T-cell (primary cell): ENCODE measurements at regions of chr12 and their contacts with region 1.

Region 1: DNA sequence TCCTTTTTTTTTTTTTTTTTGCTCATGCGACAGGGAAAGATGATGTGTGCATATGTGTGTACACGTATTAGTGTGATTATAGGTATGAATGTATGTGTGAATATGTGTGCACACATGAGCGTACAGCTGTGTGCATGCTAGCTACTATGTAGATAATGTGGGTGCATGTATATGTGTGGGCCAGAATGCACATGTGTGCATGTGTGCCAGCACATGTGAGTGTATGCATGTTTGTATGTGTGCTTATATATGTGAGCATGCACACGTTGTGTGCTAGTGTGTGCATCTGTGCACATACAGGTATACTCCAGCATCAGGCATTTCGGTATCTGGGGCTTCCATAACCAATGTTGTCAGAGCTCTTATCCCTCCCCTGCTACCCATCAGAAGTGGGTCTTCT is 541.1 kb downstream of the AACS start:
- DNase-seq: no peak
- ATAC-seq: no peak
- H3K4me3 ChIP-seq: no peak overlapping the region
- H3K4me3 Mint-ChIP-seq: no peak overlapping the region
- H3K27ac ChIP-seq: no peak overlapping the region
- H3K27ac Mint-ChIP-seq: no peak overlapping the region
- H3K4me1 ChIP-seq: no peaks in the 10 kb centered on the region
- H3K4me1 Mint-ChIP-seq: no peaks in the 10 kb centered on the region
- H3K27me3 ChIP-seq: no peaks in the 10 kb centered on the region
- H3K27me3 Mint-ChIP-seq: no peaks in the 10 kb centered on the region

Region 2: DNA sequence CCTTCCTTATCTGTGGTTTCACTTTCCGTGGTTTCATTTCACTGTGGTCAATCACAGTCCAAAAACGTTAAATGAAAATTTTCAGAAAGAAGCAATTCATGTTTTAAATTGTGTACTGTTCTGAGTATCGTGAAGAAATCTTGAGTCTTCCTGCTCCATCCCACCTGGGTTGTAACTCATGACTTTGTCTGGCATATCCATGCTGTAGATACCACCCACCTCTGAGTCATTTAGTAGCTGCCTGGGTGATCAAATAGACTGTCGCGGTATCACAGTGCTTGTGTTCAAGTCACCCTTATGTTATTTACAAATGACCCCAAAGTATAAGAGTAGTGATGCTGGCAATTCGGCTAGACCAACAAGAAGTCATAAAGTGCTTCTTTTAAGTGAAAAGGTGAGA is 19.9 kb before region 1 on chr12:
- CTCF ChIA-PET with region 1: interaction called in 1 of 2 experiments, 11 read pairs
- POLR2A ChIA-PET with region 1: no interaction called
- DNase-seq: no peak
- ATAC-seq: no peak
- H3K4me3 ChIP-seq: no peak overlapping the region
- H3K4me3 Mint-ChIP-seq: no peak overlapping the region
- H3K27ac ChIP-seq: no peak overlapping the region
- H3K27ac Mint-ChIP-seq: no peak overlapping the region
- H3K4me1 ChIP-seq: no peaks in the 10 kb centered on the region
- H3K4me1 Mint-ChIP-seq: no peaks in the 10 kb centered on the region
- H3K27me3 ChIP-seq: no peaks in the 10 kb centered on the region
- H3K27me3 Mint-ChIP-seq: peaks cover 4% of the 10 kb centered on the region in 2 donors

Region 3: DNA sequence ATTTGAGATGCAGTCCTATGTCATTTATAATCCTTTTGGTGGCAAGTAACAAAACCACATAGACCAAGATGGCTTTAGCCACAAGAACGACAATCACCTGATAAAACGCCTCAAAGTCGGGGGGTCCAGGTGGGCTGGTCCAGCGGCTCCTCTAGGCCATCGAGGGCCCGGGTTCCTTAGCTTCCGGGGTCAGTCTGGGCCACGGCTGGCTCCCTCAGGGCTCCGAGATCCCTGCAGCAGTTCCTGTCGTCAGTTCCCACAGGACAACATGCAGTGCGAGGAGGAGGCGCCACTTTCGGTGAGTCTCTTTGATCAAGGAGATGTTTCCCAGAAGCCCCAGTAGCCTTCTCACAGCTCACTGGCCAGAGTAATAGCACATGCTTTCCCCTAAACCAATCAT is 33.5 kb after region 1 on chr12:
- CTCF ChIA-PET with region 1: no interaction called
- POLR2A ChIA-PET with region 1: no interaction called
- DNase-seq: no peak
- ATAC-seq: no peak
- H3K4me3 ChIP-seq: no peak overlapping the region
- H3K4me3 Mint-ChIP-seq: no peak overlapping the region
- H3K27ac ChIP-seq: no peak overlapping the region
- H3K27ac Mint-ChIP-seq: no peak overlapping the region
- H3K4me1 ChIP-seq: no peaks in the 10 kb centered on the region
- H3K4me1 Mint-ChIP-seq: no peaks in the 10 kb centered on the region
- H3K27me3 ChIP-seq: peaks cover 0 to 2% of the 10 kb centered on the region in 2 experiments
- H3K27me3 Mint-ChIP-seq: no peaks in the 10 kb centered on the region

Region 4: DNA sequence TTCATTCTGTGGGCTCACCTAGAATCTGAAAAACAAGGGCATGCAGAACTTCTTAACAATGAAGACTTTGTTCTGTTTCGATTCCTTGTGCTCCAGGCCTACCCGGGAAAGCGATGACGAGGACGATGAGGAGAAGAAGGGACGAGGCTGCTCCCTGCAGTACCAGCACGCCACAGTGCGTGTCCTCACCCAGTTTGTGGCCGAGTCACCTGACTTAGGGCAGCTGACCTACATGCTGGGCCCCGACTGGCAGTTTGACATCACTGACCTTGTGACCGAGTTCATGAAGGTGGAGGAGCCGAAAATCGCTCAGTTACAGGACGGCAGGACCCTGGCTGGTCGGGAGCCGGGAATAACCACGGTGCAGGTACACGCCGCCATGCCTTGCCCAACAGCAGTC is 44.3 kb after region 1 on chr12:
- CTCF ChIA-PET with region 1: no interaction called
- POLR2A ChIA-PET with region 1: no interaction called
- DNase-seq: no peak
- ATAC-seq: no peak
- H3K4me3 ChIP-seq: no peak overlapping the region
- H3K4me3 Mint-ChIP-seq: no peak overlapping the region
- H3K27ac ChIP-seq: no peak overlapping the region
- H3K27ac Mint-ChIP-seq: no peak overlapping the region
- H3K4me1 ChIP-seq: no peaks in the 10 kb centered on the region
- H3K4me1 Mint-ChIP-seq: no peaks in the 10 kb centered on the region
- H3K27me3 ChIP-seq: no peaks in the 10 kb centered on the region
- H3K27me3 Mint-ChIP-seq: no peaks in the 10 kb centered on the region